Activated CD4-positive, alpha-beta T cell treated with anti-CD3 and anti-CD28 coated beads, Interleukin-2, amount 10 ng/mL, durations not matched to agents 24 days and 14 days (primary cell): ENCODE measurements at regions of chr17 and their contacts with region 1.

Region 1: GRCh38 chr17:67475236-67475937 is 98.3 kb downstream of the PITPNC1 start:
- DNase-seq: peak; percentile 95
- H3K4me3 Mint-ChIP-seq: peak overlapping the region; percentile 69
- H3K27ac Mint-ChIP-seq: peak overlapping the region; percentile 87
- H3K4me1 Mint-ChIP-seq: peaks cover 58% of the 10 kb centered on the region
- H3K27me3 Mint-ChIP-seq: no peaks in the 10 kb centered on the region

Region 2: GRCh38 chr17:67293251-67294203 is 181.9 kb before region 1 on chr17:
- intact Hi-C with region 1: no loop called
- DNase-seq: peak; percentile 90
- H3K4me3 Mint-ChIP-seq: no peak overlapping the region
- H3K27ac Mint-ChIP-seq: no peak overlapping the region
- H3K4me1 Mint-ChIP-seq: peaks cover 2% of the 10 kb centered on the region
- H3K27me3 Mint-ChIP-seq: peaks cover 2% of the 10 kb centered on the region

Region 3: DNA sequence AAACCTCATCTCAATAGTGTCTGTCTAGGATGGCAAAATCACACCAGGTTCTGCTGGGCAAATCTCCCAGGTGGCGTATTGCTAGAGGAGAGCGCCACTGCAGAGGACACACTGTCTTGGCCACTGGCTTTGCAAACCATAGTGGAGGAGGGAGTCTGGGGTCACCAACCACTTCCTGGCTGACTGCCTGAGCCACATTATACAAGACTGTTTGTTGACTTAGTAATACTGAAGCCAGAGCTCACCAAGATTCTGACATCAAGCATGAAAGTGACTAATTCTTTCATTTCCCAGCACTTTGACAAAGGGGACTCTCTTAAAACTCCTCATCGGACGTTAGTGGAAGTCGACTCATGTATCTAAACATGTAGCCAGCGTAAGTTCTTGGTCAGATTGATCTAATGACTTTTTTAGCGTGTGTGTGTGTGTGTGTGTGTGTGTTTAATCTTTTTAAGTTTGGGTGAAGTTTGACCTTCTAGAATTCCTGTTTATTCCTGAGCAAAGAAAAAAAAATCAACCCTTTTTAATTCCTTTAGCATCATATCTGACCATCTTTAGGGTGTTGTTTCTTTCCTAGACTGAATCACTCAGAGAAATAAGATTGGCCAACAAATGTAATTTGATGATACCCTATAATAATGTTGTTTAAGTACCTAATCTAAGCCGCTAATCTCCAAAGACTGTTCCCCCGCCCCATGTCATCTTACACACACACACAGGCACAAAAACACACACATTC is 84.6 kb before region 1 on chr17:
- intact Hi-C with region 1: loop called (anchors 1 kb)
- DNase-seq: peak; percentile 92
- H3K4me3 Mint-ChIP-seq: peak overlapping the region; percentile 70
- H3K27ac Mint-ChIP-seq: peak overlapping the region; percentile 90
- H3K4me1 Mint-ChIP-seq: peaks cover 46% of the 10 kb centered on the region
- H3K27me3 Mint-ChIP-seq: no peaks in the 10 kb centered on the region

Region 4: DNA sequence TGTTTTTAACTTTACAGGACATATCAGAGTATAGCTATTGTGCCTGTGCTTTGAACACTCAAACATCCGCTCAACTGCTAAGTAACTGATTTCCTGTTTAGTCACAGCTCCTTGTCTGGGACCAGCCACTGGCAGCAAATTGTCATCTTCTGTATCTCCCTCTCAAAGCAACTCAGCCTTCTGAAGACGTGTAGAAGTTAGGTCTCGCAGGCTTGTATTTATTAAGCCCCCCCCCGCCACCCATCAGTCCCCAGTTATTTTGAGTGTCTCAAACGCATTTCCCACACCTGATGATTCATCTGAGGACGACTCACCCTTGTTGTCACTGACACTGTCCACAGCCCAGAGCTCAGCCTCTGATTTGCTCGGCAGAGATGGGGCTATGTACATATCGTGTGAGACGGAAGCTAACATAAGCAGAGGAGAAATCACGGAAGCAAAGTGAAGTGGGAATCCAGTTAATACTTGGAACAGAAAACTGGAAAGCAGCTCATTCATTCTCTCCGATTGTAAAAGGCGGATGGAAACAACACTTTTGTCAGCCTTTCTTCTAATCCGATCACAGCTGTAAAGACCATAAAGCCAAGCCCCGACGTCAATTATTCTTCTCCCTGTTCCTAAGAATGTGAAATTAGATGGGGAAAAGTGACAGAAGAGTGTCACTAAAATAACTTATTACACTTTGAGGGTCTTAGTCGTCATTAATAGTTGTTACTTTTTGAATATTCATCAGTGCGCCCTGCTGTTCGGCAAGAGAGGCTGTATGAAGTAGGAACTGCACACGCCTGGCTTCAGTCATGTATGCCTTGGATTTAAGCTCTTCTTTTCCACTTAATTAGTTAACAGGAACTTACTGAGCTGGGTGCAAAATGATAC is 34.1 kb before region 1 on chr17:
- intact Hi-C with region 1: loop called (anchors 2 kb)
- DNase-seq: peak; percentile 90
- H3K4me3 Mint-ChIP-seq: peak overlapping the region; percentile 84
- H3K27ac Mint-ChIP-seq: peak overlapping the region; percentile 96
- H3K4me1 Mint-ChIP-seq: peaks cover 51% of the 10 kb centered on the region
- H3K27me3 Mint-ChIP-seq: no peaks in the 10 kb centered on the region

Region 5: DNA sequence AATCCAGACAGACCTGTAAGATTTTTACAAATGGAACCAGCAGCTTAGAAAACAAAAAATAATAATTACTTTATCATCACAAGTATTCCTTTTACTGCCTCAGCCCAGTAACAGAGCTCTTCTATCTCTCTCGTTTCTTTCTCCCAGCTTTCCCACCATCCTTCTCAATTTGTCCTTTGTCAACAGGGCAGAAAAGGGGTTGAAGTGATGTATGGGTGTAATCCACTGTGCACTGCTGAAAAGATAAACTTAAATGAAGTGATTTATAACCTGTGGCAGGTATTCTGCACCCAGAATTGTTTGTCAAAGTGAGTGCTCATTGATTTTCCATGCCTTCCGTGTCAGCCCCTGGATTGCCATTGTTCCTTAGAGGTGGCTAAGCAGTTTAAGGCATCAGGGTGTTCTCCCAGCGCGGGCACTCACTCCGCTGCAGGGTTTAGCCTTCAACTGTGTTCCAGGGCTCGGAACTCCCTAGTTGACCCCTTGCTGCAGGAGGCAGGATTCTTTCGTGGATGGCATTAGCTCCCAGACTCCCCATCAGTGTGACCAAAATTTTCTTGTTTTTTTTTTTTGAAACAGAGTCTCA is 15.4 kb before region 1 on chr17:
- intact Hi-C with region 1: loop called (anchors 2 kb)
- DNase-seq: no peak
- H3K4me3 Mint-ChIP-seq: no peak overlapping the region
- H3K27ac Mint-ChIP-seq: no peak overlapping the region
- H3K4me1 Mint-ChIP-seq: peaks cover 35% of the 10 kb centered on the region
- H3K27me3 Mint-ChIP-seq: no peaks in the 10 kb centered on the region

Region 6: DNA sequence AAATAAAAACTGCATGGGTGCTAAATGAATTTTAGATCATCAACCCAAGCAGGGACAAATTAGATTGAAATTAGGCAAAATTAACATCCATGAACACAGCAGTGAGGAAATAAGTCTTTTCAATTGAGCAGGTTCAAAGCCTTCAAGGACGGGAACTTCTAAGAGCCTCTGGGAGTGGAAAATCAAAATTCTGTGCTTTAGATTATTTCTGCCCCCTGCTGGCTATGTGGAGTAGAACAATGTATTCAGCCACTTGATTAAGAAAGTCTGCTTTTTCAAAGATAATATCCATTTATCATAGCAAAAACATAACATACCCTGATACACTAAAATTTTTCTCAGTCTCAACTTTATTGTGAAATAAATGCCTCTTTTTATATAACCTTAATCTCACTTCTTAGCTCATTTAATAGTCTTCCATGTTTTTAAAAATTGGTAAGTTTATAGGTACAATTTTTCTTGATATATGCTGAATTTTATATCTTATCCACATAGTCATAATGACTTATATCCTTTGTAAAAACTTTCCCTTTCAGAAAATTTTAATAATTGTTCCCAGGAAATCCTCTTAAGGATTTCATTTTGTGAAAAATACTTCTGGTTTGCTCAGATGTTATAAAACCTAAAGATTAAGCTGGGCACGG is 214.3 kb after region 1 on chr17:
- intact Hi-C with region 1: loop called (anchors 2 kb)
- DNase-seq: peak; percentile 87
- H3K4me3 Mint-ChIP-seq: no peak overlapping the region
- H3K27ac Mint-ChIP-seq: no peak overlapping the region
- H3K4me1 Mint-ChIP-seq: peaks cover 4% of the 10 kb centered on the region
- H3K27me3 Mint-ChIP-seq: no peaks in the 10 kb centered on the region

Region 7: GRCh38 chr17:67700037-67700724 is 224.8 kb after region 1 on chr17:
- intact Hi-C with region 1: no loop called
- DNase-seq: no peak
- H3K4me3 Mint-ChIP-seq: no peak overlapping the region
- H3K27ac Mint-ChIP-seq: no peak overlapping the region
- H3K4me1 Mint-ChIP-seq: no peaks in the 10 kb centered on the region
- H3K27me3 Mint-ChIP-seq: peaks cover 7% of the 10 kb centered on the region